CD8-positive, alpha-beta T cell (primary cell): ENCODE measurements at regions of chr6 and their contacts with region 1.

Region 1: GRCh38 chr6:99119109-99120031 is 171.6 kb upstream of the FBXL4 start:
- DNase-seq: peak in 4 of 9 experiments; percentile 5 to 41 (median 26)
- ATAC-seq: no peak
- H3K4me3 ChIP-seq: no peak overlapping the region
- H3K4me3 Mint-ChIP-seq: no peak overlapping the region
- H3K27ac ChIP-seq: no peak overlapping the region
- H3K27ac Mint-ChIP-seq: no peak overlapping the region
- H3K4me1 ChIP-seq: no peaks in the 10 kb centered on the region
- H3K4me1 Mint-ChIP-seq: no peaks in the 10 kb centered on the region
- H3K27me3 ChIP-seq: no peaks in the 10 kb centered on the region
- H3K27me3 Mint-ChIP-seq: peaks cover 17% of the 10 kb centered on the region
- CTCF ChIP-seq: peak; percentile 61

Region 2: GRCh38 chr6:97186416-97186999 is 1932.9 kb before region 1 on chr6:
- CTCF ChIA-PET with region 1: no interaction called
- POLR2A ChIA-PET with region 1: no interaction called
- intact Hi-C with region 1: loop called in 1 of 2 experiments (anchors 1 kb)
- DNase-seq: peak; percentile 33 to 72 (median 60)
- ATAC-seq: peak; percentile 65
- H3K4me3 ChIP-seq: no peak overlapping the region
- H3K4me3 Mint-ChIP-seq: no peak overlapping the region
- H3K27ac ChIP-seq: no peak overlapping the region
- H3K27ac Mint-ChIP-seq: no peak overlapping the region
- H3K4me1 ChIP-seq: no peaks in the 10 kb centered on the region
- H3K4me1 Mint-ChIP-seq: no peaks in the 10 kb centered on the region
- H3K27me3 ChIP-seq: no peaks in the 10 kb centered on the region
- H3K27me3 Mint-ChIP-seq: no peaks in the 10 kb centered on the region
- CTCF ChIP-seq: peak; percentile 91

Region 3: DNA sequence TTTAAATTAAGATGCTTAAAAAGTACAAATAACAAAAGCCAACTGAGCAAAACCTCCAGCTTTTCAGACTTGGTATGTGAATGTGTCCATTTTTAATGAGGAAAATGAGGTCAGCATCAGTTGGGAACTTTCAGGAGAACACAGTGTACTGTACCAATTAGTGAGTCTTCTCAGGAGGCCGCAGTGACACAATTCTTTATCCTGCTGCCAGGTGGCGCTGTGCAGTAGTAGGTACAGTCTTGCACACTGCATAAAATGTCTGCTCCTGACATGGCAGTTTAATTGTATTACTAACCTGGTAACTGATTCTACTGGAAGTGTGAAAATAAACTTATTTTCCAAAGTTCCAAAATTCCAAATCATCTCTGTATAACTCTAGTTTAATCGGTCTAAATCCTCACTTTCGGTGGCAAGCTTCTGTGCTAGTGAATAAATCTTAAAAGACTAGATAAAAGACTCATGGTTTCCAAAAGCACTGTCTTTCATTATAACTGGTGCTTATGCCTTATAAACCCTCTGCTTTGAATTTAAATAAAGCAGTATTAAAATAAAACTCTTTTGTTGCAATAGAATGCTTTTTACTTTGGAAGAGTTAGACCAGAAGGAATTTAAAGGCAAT is 1621.5 kb before region 1 on chr6:
- CTCF ChIA-PET with region 1: interaction called, 4 read pairs
- POLR2A ChIA-PET with region 1: no interaction called
- intact Hi-C with region 1: loop called in 1 of 2 experiments (anchors 1 kb)
- DNase-seq: peak; percentile 6 to 69 (median 50)
- ATAC-seq: peak; percentile 75
- H3K4me3 ChIP-seq: no peak overlapping the region
- H3K4me3 Mint-ChIP-seq: no peak overlapping the region
- H3K27ac ChIP-seq: no peak overlapping the region
- H3K27ac Mint-ChIP-seq: no peak overlapping the region
- H3K4me1 ChIP-seq: no peaks in the 10 kb centered on the region
- H3K4me1 Mint-ChIP-seq: no peaks in the 10 kb centered on the region
- H3K27me3 ChIP-seq: no peaks in the 10 kb centered on the region
- H3K27me3 Mint-ChIP-seq: peaks cover 12% of the 10 kb centered on the region
- CTCF ChIP-seq: peak; percentile 84

Region 4: DNA sequence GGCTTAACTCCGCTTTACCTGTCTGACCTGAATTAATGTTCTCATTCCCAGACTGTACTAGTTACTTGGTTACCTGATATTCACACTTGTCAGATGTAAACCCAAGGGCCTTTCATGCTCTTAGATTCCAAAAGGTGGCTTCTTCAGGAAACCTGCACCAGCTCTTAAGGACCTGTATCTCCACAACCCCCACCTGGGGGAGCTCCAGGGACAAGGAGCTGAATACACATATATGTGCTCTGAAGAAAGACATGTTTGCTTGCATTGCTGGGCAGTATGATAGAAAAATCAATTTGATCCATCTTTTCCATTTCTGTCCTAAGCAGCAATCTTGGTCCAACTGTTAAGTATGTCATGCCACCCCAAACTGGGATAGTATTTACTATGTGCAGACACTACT is 349.8 kb before region 1 on chr6:
- CTCF ChIA-PET with region 1: no interaction called
- POLR2A ChIA-PET with region 1: no interaction called
- intact Hi-C with region 1: loop called in 1 of 2 experiments (anchors 5 kb)
- DNase-seq: peak in 3 of 9 experiments; percentile 5 to 18 (median 15)
- ATAC-seq: no peak
- H3K4me3 ChIP-seq: no peak overlapping the region
- H3K4me3 Mint-ChIP-seq: no peak overlapping the region
- H3K27ac ChIP-seq: no peak overlapping the region
- H3K27ac Mint-ChIP-seq: no peak overlapping the region
- H3K4me1 ChIP-seq: no peaks in the 10 kb centered on the region
- H3K4me1 Mint-ChIP-seq: peaks cover 1% of the 10 kb centered on the region
- H3K27me3 ChIP-seq: no peaks in the 10 kb centered on the region
- H3K27me3 Mint-ChIP-seq: peaks cover 21% of the 10 kb centered on the region
- CTCF ChIP-seq: no peak